Activated naive CD4-positive, alpha-beta T cell treated with anti-CD3 and anti-CD28 coated beads for 36 hours (primary cell): ENCODE measurements at regions of chr11 and their contacts with region 1.

Region 1: DNA sequence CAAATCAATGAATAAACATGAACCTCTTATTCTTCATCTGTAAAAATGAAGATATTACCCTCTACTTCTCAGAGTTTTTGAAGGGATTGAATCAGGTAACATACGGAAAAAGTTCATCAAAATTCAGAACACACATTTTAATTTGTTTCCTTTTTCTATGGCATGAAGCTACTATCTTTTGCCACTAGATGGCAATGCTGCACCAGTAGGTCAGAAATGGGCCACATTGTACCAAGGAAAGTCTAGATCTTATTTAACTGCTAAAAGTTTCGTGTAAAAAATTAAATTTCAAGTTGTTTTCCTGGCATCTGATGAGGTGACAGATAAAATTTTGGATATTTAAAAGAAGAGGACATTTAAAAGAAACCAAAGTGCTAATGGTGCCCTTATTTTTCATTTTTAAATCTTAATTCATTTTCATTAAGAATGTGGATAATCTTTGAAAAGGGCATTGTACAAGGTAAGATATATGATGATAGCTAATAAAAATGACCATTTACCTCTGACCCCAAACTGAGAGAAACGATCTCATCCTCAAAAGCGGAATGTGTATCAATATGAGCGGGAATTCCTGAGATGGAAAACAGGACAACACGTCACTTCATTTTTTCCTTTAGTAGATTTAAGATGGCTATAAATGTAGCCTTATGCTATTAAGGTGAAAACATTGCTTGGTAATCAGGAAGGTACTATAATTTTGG is 16.1 kb downstream of the ALKBH8 start:
- DNase-seq: peak; percentile 55
- H3K4me3 Mint-ChIP-seq: no peak overlapping the region
- H3K27ac Mint-ChIP-seq: no peak overlapping the region
- H3K4me1 Mint-ChIP-seq: peaks cover 6% of the 10 kb centered on the region
- H3K27me3 Mint-ChIP-seq: no peaks in the 10 kb centered on the region

Region 2: GRCh38 chr11:107538821-107539220 is 10.6 kb before region 1 on chr11:
- CTCF ChIA-PET with region 1: interaction called, 16 read pairs
- intact Hi-C with region 1: no loop called
- DNase-seq: no peak
- H3K4me3 Mint-ChIP-seq: no peak overlapping the region
- H3K27ac Mint-ChIP-seq: no peak overlapping the region
- H3K4me1 Mint-ChIP-seq: peaks cover 2% of the 10 kb centered on the region
- H3K27me3 Mint-ChIP-seq: no peaks in the 10 kb centered on the region

Region 3: GRCh38 chr11:107590460-107591377 is 41.3 kb after region 1 on chr11 and contains the start of gene ELMOD1:
- CTCF ChIA-PET with region 1: interaction called, 4 read pairs
- intact Hi-C with region 1: loop called (anchors 5 kb)
- DNase-seq: peak; percentile 57
- H3K4me3 Mint-ChIP-seq: peak within 1 kb of the TSS; percentile 77
- H3K27ac Mint-ChIP-seq: no peak within 1 kb of the TSS
- H3K4me1 Mint-ChIP-seq: peaks cover 22% of the 10 kb centered on the region
- H3K27me3 Mint-ChIP-seq: peaks cover 71% of the 10 kb centered on the region
- total RNA-seq, gene ELMOD1: not detected

Region 4: DNA sequence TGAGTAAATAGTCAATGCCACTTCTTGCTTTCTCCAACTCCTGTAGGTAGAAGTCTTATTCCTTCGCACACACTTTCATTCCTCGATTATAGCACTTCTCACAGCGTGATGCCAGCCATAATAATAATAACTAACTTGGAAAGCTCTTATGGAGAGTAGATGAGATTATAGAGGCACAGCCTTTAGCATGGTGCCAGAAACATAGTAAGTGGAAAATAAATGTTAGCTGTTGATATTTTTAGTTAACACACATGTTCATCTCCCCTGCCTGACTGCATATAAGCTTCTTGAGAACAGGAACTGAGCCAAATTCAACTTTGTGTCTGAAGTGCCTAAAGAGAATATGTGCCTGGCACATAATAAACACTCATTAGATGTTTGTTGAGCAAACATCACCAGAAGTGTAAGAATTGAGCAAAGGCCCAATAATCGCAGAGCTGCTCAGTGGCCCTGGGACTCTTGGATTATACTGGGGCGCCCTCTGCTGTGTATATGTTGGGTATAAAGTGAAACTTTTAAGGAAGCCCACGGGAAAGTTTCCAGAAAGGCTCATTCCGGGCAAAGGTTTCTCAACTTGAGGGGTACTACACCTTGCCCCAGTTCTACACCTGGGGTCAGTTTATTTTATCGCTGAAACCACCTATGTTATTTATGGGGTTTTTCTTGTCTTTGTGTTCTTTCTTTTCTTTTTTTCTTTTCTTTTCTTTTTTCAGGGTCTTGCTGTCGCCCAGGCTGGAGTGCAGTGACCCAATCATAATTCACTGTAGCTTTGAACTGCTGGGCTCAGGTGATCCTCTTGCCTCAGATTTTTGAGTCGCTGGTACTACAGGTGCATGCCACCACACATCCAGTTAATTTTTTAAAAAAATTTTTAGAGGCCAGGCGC is 140.2 kb after region 1 on chr11:
- CTCF ChIA-PET with region 1: interaction called, 62 read pairs
- intact Hi-C with region 1: loop called (anchors 1 kb)
- DNase-seq: peak; percentile 81
- H3K4me3 Mint-ChIP-seq: no peak overlapping the region
- H3K27ac Mint-ChIP-seq: no peak overlapping the region
- H3K4me1 Mint-ChIP-seq: no peaks in the 10 kb centered on the region
- H3K27me3 Mint-ChIP-seq: peaks cover 13% of the 10 kb centered on the region

Region 5: DNA sequence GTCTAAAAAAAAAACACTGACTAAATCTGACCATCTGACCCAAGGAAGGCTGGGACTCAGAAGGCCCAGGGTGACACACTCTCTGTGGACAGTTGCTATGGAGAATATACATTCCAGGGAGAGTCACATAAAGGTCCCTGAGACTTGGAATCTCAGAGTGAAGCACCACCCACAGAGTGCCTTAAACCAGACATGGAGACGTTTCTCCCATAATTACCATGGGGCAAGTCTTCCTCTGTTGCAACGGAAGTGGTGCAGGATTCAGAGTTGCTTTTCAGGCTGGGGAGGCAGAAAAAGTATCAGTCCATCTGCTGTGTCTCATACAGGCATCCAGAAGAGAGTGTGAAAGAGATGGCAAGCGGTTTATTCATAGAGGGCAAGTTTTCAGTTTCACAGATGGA is 221.1 kb after region 1 on chr11:
- CTCF ChIA-PET with region 1: interaction called, 6 read pairs
- intact Hi-C with region 1: loop called (anchors 1 kb)
- DNase-seq: no peak
- H3K4me3 Mint-ChIP-seq: no peak overlapping the region
- H3K27ac Mint-ChIP-seq: no peak overlapping the region
- H3K4me1 Mint-ChIP-seq: no peaks in the 10 kb centered on the region
- H3K27me3 Mint-ChIP-seq: peaks cover 4% of the 10 kb centered on the region